Activated naive CD4-positive, alpha-beta T cell treated with anti-CD3 and anti-CD28 coated beads, Interleukin-2, amount 10 ng/mL, durations not matched to agents 7 days and 5 days (primary cell): ENCODE measurements at regions of chr22 and their contacts with region 1.

Region 1: GRCh38 chr22:40436505-40437451 is 66.4 kb downstream of the SGSM3 start:
- DNase-seq: no peak
- H3K4me3 Mint-ChIP-seq: no peak overlapping the region
- H3K27ac Mint-ChIP-seq: peak overlapping the region; percentile 73
- H3K4me1 Mint-ChIP-seq: peaks cover 39% of the 10 kb centered on the region
- H3K27me3 Mint-ChIP-seq: no peaks in the 10 kb centered on the region

Region 2: GRCh38 chr22:40128989-40129388 is 307.8 kb before region 1 on chr22:
- CTCF ChIA-PET with region 1: no interaction called
- DNase-seq: peak; percentile 45
- H3K4me3 Mint-ChIP-seq: peak overlapping the region; percentile 13
- H3K27ac Mint-ChIP-seq: peak overlapping the region; percentile 70
- H3K4me1 Mint-ChIP-seq: peaks cover 43% of the 10 kb centered on the region
- H3K27me3 Mint-ChIP-seq: no peaks in the 10 kb centered on the region

Region 3: DNA sequence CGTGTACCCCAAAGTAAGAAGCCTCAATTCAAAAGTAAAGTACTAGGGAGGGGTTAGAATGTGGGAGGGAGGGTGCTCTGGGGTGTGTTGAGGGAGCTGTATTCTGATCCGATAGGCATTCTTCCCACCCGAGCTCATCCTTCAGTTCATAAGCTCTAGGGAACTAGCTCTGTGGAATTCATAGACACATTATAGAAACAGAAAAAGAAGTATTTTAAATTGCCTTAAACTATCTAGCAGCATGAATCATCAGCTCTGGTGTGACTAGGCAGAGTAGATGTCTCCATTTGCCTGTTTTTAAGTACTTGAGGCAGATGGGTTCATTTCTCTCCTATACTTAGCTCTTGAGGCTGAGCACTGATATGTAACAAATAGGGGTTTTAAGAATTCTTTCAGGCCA is 73.7 kb before region 1 on chr22:
- CTCF ChIA-PET with region 1: no interaction called
- DNase-seq: no peak
- H3K4me3 Mint-ChIP-seq: no peak overlapping the region
- H3K27ac Mint-ChIP-seq: no peak overlapping the region
- H3K4me1 Mint-ChIP-seq: no peaks in the 10 kb centered on the region
- H3K27me3 Mint-ChIP-seq: no peaks in the 10 kb centered on the region

Region 4: DNA sequence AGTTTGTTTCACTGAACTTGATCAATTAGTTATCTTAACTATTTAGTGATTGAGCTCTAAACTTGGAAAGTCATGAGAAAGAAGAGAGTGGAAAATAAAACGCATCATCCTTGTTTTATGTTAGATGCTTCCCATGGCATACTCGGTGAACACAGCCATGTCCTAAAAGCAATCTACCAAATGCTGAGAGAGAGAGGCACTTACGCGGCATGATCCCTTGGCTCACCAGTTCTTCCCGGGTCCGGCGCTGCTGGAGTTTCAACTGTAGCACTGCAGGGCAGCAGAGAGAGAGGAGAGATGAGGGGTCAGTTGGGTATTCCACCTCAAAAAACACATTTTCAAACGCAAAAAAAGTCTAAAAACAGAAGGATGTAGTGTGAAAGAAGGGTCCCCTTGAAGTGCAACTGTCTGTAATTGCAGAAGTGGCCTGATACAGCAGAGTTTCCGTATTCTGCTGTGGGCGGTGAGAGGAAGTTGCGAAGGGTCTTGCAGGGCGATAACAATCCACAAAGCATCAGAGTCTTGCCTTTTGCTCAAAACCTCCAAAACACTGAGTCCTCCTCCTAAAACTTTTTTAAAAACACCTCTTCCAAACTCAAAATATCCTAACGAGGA is 26.3 kb after region 1 on chr22:
- CTCF ChIA-PET with region 1: interaction called, 34 read pairs
- DNase-seq: peak; percentile 62
- H3K4me3 Mint-ChIP-seq: peak overlapping the region; percentile 94
- H3K27ac Mint-ChIP-seq: peak overlapping the region; percentile 100
- H3K4me1 Mint-ChIP-seq: peaks cover 62% of the 10 kb centered on the region
- H3K27me3 Mint-ChIP-seq: no peaks in the 10 kb centered on the region

Region 5: DNA sequence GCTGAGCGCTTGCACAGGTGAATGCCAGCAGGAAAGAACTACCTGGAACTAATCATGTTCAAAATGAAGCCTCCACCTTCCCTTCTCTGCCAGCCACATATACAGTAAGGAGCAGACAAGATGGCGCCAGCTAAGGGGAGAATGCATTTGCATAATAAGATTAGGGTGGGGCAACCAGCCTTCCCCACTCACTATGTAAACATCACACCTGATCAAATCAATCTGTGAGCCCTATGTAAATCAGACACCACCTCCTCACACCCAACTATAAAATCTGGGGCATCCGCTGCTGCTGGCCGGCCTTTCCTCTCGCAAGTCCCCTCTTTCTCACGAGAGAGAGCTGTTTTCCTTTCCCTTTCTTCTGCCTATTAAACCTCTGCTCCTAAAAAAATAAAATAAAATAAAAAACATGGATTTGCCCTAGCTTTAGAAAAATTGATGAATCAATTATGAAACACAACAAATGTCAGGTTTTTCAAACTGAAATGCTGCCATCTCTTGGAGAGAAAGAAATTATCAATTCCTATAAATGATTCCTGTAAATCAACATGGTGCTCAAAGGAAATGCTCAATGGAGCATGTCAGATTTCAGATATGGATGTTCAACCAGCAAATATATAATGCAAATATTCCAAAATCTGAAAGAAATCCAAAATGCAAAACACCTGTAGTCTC is 42.5 kb after region 1 on chr22:
- CTCF ChIA-PET with region 1: interaction called, 77 read pairs
- DNase-seq: no peak
- H3K4me3 Mint-ChIP-seq: no peak overlapping the region
- H3K27ac Mint-ChIP-seq: no peak overlapping the region
- H3K4me1 Mint-ChIP-seq: peaks cover 34% of the 10 kb centered on the region
- H3K27me3 Mint-ChIP-seq: no peaks in the 10 kb centered on the region

Region 6: GRCh38 chr22:40533712-40534378 is 97.1 kb after region 1 on chr22:
- CTCF ChIA-PET with region 1: interaction called, 11 read pairs
- DNase-seq: peak; percentile 73
- H3K4me3 Mint-ChIP-seq: peak overlapping the region; percentile 78
- H3K27ac Mint-ChIP-seq: peak overlapping the region; percentile 80
- H3K4me1 Mint-ChIP-seq: peaks cover 57% of the 10 kb centered on the region
- H3K27me3 Mint-ChIP-seq: no peaks in the 10 kb centered on the region

Region 7: GRCh38 chr22:40603088-40603605 is 166.4 kb after region 1 on chr22:
- CTCF ChIA-PET with region 1: no interaction called
- DNase-seq: no peak
- H3K4me3 Mint-ChIP-seq: no peak overlapping the region
- H3K27ac Mint-ChIP-seq: no peak overlapping the region
- H3K4me1 Mint-ChIP-seq: peaks cover 10% of the 10 kb centered on the region
- H3K27me3 Mint-ChIP-seq: no peaks in the 10 kb centered on the region

Region 8: DNA sequence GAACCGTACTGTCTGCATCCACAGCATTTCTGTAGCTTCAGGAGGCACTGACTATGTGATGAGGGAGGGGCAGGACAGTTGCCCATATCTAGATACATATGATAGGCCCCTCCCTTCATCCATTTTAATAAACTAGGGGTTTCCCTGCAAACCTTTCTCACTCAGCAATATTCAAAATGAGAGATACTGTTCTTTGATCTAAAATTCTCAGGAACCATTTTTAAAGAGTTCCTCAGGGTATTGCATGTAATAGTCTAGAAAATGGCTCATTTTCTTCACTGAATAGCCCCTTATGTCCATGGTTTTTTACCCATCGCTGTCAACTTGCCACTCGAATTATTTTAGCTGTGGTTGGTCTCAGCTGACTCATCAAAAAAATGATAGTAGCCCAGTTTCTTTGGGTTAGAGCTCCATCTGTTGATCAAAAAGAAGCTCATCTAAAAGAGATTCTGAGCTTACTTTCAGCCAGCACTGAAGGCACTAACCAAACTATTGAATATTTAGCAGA is 462.1 kb after region 1 on chr22:
- CTCF ChIA-PET with region 1: interaction called, 22 read pairs
- DNase-seq: peak; percentile 23
- H3K4me3 Mint-ChIP-seq: no peak overlapping the region
- H3K27ac Mint-ChIP-seq: no peak overlapping the region
- H3K4me1 Mint-ChIP-seq: peaks cover 8% of the 10 kb centered on the region
- H3K27me3 Mint-ChIP-seq: no peaks in the 10 kb centered on the region